Adrenal gland (tissue), 19 donors: ENCODE measurements at regions of chr7 and their contacts with region 1.

Region 1: DNA sequence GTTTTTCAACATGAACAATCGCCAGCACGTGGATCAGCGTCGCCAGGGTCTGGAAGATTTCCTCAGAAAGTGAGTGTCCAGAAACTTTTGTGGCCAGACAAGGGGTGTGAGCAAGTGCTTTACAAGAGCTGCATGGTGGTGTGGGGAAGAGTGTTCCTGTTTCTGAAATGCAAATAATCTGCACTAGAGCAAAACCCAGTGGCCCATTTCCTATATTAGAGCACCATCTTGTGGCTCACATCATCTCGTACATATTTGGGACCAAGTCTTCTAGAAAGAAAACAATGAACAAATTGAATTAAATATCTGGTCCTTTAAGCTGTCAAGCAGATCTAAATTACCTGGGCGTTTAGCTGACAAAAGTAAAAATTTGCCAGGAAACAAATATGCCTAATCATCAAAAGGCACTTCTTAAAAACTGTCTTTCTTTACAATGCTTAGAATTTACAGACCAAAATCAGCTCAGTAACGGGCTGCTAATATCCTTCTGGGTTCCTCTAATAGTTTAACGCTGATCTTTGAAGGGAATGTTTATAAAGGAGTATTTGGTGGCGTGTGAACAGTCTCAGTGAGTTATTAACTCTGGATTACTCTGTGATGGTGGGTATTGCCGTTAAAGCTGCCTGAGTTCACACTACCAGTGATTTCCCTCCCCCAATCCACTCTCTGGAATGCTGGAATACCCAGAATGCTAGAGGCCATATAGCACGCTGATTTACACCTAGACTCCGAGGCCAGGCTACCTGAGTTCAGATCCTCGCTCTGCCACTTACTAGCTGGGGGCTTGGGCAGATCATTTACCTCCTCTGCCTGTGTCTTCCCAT is 73.6 kb downstream of the SNX10 start:
- DNase-seq: peak; percentile 44 to 81 (median 63)
- H3K4me3 ChIP-seq: no peak overlapping the region
- H3K27ac ChIP-seq: no peak overlapping the region
- H3K4me1 ChIP-seq: no peaks in the 10 kb centered on the region
- H3K27me3 ChIP-seq: no peaks in the 10 kb centered on the region
- CTCF ChIP-seq: peak; percentile 49 to 97 (median 88)
- POLR2A ChIP-seq: no peak

Region 2: GRCh38 chr7:25894902-25895791 is 470.1 kb before region 1 on chr7:
- intact Hi-C with region 1: loop called (anchors 5 kb)
- DNase-seq: peak; percentile 68 to 86 (median 79)
- H3K4me3 ChIP-seq: peak overlapping the region in 2 of 4 donors; percentile 14 to 52
- H3K27ac ChIP-seq: peak overlapping the region in 3 of 5 donors; percentile 55 to 79 (median 56)
- H3K4me1 ChIP-seq: peaks cover 3 to 21% of the 10 kb centered on the region in 2 donors
- H3K27me3 ChIP-seq: no peaks in the 10 kb centered on the region
- CTCF ChIP-seq: peak; percentile 55 to 73 (median 66)
- POLR2A ChIP-seq: peak in 1 of 2 donors; percentile 32

Region 3: DNA sequence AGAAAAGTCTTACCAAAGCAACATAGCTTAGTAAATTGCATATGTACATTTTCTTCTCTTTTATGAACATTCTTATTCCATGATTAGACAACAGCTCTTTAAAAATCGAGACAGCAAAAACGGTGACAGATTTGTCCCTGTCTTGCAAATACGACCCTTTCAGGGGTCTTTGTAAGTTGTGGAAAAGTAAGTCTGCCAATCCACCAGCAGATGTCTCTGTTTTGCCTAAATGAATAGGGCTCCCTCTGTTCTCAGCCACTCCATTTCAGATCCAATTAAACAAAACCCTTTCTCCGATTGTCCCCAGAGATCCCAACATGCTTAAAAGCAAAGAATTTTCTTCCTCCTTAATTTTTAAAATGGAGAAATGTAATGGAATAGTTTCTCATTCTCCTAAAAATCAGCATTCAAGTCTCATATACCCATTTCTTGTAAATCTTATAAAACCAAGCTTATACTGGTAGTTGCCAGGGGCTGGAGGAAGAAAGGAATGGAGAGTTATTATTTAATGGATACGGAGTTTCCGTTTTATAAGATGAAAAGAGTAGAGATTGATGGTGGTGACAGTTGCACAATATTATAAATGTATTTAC is 274.3 kb before region 1 on chr7:
- intact Hi-C with region 1: loop called in 1 of 2 experiments (anchors 5 kb)
- DNase-seq: peak in 4 of 7 donors; percentile 16 to 45 (median 20)
- H3K4me3 ChIP-seq: no peak overlapping the region
- H3K27ac ChIP-seq: no peak overlapping the region
- H3K4me1 ChIP-seq: no peaks in the 10 kb centered on the region
- H3K27me3 ChIP-seq: no peaks in the 10 kb centered on the region
- CTCF ChIP-seq: peak; percentile 45 to 77 (median 64)
- POLR2A ChIP-seq: no peak

Region 4: GRCh38 chr7:26265065-26265464 is 100.2 kb before region 1 on chr7:
- intact Hi-C with region 1: no loop called
- DNase-seq: peak in 1 of 7 donors; percentile 19
- H3K4me3 ChIP-seq: no peak overlapping the region
- H3K27ac ChIP-seq: no peak overlapping the region
- H3K4me1 ChIP-seq: no peaks in the 10 kb centered on the region
- H3K27me3 ChIP-seq: no peaks in the 10 kb centered on the region
- CTCF ChIP-seq: no peak
- POLR2A ChIP-seq: no peak

Region 5: GRCh38 chr7:26284995-26285632 is 80.2 kb before region 1 on chr7:
- intact Hi-C with region 1: loop called in 1 of 2 experiments (anchors 5 kb)
- DNase-seq: no peak
- H3K4me3 ChIP-seq: no peak overlapping the region
- H3K27ac ChIP-seq: no peak overlapping the region
- H3K4me1 ChIP-seq: no peaks in the 10 kb centered on the region
- H3K27me3 ChIP-seq: no peaks in the 10 kb centered on the region
- CTCF ChIP-seq: no peak
- POLR2A ChIP-seq: no peak

Region 6: DNA sequence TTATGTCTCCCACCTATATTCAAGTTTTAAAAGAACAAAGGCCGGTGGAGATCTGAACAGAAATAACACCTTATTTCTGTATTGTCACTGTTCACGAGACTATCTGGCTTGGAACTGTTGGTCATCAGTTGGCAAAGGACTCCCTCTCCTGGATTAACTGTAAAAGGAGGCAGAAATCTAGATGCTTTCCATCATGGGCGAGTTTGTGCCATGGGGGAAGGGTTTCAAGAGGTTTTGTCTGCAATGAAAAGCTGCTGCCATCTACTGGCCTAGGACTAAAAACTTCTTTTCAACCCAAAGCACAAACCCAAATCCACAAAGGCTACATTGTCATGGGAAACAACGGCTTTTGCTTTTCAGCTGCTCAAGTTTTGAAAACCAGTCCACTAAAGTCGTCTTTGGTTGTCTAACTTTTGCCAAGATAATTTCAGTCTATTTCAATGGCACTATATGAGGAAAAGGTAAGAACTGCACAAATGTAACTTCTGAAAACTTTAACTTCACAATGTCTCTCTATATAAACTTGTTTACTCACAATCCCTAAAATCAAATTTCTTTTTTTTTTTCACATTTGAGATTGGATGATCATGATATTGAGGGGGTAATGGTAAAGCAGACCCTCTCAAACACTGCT is 302.3 kb after region 1 on chr7:
- intact Hi-C with region 1: loop called in 1 of 2 experiments (anchors 5 kb)
- DNase-seq: peak; percentile 84 to 94 (median 91)
- H3K4me3 ChIP-seq: no peak overlapping the region
- H3K27ac ChIP-seq: no peak overlapping the region
- H3K4me1 ChIP-seq: peaks cover 0 to 11% of the 10 kb centered on the region in 2 donors
- H3K27me3 ChIP-seq: no peaks in the 10 kb centered on the region
- CTCF ChIP-seq: peak; percentile 46 to 97 (median 92)
- POLR2A ChIP-seq: no peak

Region 7: GRCh38 chr7:27160546-27161213 is 795.4 kb after region 1 on chr7:
- intact Hi-C with region 1: loop called (anchors 5 to 10 kb)
- DNase-seq: peak; percentile 86 to 96 (median 93)
- H3K4me3 ChIP-seq: peak overlapping the region in 3 of 4 donors; percentile 2 to 75 (median 52)
- H3K27ac ChIP-seq: peak overlapping the region in 4 of 5 donors; percentile 52 to 88 (median 74)
- H3K4me1 ChIP-seq: peaks cover 5 to 25% of the 10 kb centered on the region in 2 donors
- H3K27me3 ChIP-seq: peaks cover 12% of the 10 kb centered on the region
- CTCF ChIP-seq: peak; percentile 98 to 100 (median 99)
- POLR2A ChIP-seq: peak in 1 of 2 donors; percentile 58